Left ventricle myocardium inferior (tissue), 1 donor: ENCODE measurements at regions of chr17 and their contacts with region 1.

Region 1: DNA sequence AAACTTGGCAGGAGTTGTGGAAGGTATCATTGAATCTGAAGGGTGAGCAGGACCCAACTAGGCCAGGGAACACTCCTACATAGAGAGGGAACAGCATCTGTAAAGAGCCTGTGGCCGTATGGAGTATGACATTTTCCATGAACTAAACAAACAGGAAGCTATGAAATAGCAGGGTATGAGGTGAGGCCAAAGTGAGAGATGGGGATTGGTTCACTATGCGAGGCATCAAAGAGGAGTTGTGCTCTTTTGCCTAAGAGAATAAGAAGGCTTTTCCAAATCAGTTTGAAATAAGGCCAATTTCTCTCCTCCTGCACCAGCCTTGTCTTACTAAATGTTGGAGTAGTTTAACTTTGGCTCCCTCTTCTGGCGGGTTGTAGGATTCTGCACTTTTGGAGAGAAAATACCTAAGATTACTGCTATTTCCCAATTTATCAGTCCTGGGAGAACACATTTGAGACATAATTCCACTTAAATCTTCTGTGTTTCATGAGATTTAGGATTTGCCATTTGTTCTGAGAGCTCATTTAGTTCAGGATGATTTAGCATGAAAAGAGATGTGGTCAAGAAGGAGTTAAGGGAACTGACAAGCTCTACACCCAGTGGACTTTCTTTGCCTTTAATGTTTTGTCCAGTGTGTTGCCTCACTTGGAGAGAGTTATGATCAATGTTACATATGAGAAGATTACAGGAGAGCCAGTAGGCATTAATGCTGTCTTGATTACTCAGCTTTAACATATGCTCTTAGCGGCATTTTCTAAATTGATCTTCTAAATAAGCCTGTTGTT is 55.4 kb downstream of the TNRC6C start:
- DNase-seq: no peak
- H3K4me3 ChIP-seq: no peak overlapping the region
- H3K27ac ChIP-seq: peak overlapping the region; percentile 39
- H3K4me1 ChIP-seq: peaks cover 30% of the 10 kb centered on the region
- H3K27me3 ChIP-seq: no peaks in the 10 kb centered on the region
- CTCF ChIP-seq: peak; percentile 84

Region 2: DNA sequence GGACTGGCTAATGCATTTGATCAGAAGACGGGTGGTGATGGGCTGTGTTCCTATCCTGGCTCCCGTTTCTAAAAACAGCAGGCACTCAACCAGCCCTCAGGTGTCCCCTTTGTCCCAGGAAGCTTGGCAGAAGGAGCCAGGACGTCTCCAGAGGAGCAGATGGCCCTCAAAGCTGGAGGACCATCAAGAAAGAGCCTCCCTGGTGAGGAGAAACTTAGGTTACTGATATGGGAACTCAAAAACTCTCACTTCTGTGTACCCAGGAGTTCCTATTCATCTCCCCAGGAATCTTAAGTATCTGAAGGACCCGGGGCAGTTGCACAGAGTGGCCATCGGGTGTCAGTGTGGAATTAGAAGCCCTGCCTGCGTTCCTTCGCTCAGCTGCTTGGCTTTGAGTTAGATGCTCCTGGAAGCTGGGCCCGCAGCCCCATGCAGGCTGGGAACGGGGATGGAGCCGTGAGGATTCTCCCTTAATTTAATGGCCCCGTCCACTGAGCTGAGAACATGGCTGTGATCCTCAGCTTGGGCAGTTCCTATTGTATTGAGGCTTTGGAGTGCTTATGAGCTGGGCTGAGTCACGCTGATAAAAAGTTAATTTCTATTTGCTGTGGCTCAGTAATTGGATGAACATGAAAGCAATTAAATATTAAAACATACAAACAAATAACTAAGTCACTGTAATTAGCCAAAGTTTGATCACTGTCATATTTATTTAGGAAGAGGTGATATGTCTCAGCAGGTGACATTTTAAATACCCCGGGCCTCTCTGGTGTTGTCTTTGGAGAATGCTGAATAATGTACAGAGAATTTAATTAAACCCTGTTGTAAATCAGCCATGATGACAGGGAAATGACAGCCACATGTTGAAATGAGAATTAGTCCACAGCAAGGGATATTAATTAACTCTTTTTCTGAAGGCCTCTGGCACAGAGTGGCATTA is 471.1 kb before region 1 on chr17:
- intact Hi-C with region 1: loop called (anchors 5 kb)
- DNase-seq: peak; percentile 81
- H3K4me3 ChIP-seq: no peak overlapping the region
- H3K27ac ChIP-seq: peak overlapping the region; percentile 79
- H3K4me1 ChIP-seq: peaks cover 23% of the 10 kb centered on the region
- H3K27me3 ChIP-seq: peaks cover 12% of the 10 kb centered on the region
- CTCF ChIP-seq: peak; percentile 95

Region 3: GRCh38 chr17:77772461-77772897 is 241.4 kb before region 1 on chr17:
- intact Hi-C with region 1: loop called (anchors 5 kb)
- DNase-seq: peak; percentile 63
- H3K4me3 ChIP-seq: no peak overlapping the region
- H3K27ac ChIP-seq: peak overlapping the region; percentile 34
- H3K4me1 ChIP-seq: peaks cover 13% of the 10 kb centered on the region
- H3K27me3 ChIP-seq: no peaks in the 10 kb centered on the region
- CTCF ChIP-seq: peak; percentile 83

Region 4: GRCh38 chr17:77942112-77942988 is 71.5 kb before region 1 on chr17:
- intact Hi-C with region 1: loop called (anchors 2 kb)
- DNase-seq: peak; percentile 30
- H3K4me3 ChIP-seq: no peak overlapping the region
- H3K27ac ChIP-seq: no peak overlapping the region
- H3K4me1 ChIP-seq: no peaks in the 10 kb centered on the region
- H3K27me3 ChIP-seq: no peaks in the 10 kb centered on the region
- CTCF ChIP-seq: no peak

Region 5: GRCh38 chr17:78089576-78090281 is 75.9 kb after region 1 on chr17:
- intact Hi-C with region 1: no loop called
- DNase-seq: no peak
- H3K4me3 ChIP-seq: no peak overlapping the region
- H3K27ac ChIP-seq: peak overlapping the region; percentile 69
- H3K4me1 ChIP-seq: peaks cover 24% of the 10 kb centered on the region
- H3K27me3 ChIP-seq: no peaks in the 10 kb centered on the region
- CTCF ChIP-seq: no peak

Region 6: DNA sequence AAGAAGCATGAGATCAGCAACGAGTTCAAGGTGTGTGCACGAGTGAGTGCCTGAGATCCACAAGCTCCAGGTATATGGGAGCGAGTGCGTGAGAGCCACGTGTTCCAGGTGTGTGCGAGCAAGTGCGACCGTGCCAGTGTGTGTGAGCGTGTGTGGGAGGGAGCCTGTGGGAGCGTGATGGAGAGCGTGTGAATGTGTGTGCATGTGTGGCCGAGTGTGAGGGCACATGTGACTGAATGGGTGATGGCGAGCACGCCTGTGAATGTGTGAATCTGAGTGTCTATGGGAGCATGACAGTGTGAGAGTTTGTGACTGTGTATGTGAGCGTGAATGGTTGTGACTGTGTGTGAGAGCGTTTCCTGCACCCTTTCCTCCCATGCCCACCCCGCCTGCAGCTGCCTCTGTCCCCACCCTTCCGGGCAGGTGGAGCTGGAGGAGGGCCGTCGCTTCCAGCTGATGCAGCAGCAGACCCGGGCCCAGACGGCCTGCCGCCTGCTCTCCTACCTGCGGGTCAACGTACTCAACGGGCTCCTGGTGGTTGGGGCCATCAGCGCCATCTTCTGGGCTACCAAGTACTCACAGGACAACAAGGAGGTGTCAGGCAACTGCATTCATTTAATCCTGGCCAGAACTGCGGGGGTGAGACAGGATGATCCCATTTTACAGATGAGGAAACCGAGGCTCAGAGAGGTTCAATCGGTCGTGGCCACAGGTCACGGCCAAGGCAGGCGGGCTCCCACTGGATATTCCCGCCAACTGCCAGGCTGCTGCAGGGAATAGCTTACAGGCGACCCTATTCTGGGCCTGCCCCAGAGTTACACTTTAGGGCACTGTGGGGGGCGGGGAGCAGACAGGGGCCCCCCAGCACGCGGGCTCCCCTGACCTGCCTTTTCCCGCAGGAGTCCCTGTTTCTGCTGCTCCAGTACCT is 120.4 kb after region 1 on chr17:
- intact Hi-C with region 1: no loop called
- DNase-seq: no peak
- H3K4me3 ChIP-seq: no peak overlapping the region
- H3K27ac ChIP-seq: no peak overlapping the region
- H3K4me1 ChIP-seq: peaks cover 40% of the 10 kb centered on the region
- H3K27me3 ChIP-seq: no peaks in the 10 kb centered on the region
- CTCF ChIP-seq: peak; percentile 68